HEK293T (cell line): ENCODE measurements at regions of chr9 and their contacts with region 1.

Region 1: DNA sequence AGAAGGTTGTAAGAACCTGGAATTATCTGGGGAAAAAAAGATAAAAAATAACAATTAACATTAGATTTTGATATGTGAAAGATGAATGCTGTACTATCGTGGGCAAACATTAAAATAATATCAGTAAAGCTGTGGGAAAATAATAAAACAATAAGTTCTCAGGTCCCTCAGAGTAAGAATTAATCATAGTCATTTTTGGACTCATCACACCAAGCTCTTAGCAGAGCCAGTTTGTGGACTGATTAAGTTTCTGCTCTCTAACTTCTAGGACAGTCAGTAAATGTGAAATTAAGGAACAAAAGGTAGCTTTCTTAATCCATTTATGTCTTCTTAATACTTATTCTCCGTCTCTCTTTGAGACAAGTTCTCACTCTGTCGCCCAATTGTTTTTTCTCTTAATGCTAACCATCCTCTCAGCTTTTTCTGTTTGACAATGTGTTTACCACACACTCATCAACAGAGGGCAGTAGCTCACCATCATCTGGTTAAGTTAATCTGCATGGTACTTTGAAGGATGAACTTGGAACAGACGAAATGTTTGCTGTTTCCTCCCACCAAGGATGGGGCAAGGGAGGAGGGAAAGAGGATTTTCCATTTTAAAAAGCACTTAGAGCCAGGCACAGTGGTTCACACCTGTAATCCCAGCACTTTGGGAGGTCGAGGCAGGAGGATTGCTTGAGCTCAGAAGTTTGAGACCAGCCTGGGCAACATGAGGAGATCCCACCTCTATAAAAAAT is 5.3 kb upstream of the ACO1 start:
- DNase-seq: peak; percentile 63

Region 2: GRCh38 chr9:32526041-32526706 is 147.0 kb after region 1 on chr9 and contains the start of gene RIGI:
- CTCF ChIA-PET with region 1: interaction called, 18 read pairs
- POLR2A ChIA-PET with region 1: interaction called, 7 read pairs
- DNase-seq: peak; percentile 66

Region 3: GRCh38 chr9:32571969-32572899 is 193.1 kb after region 1 on chr9:
- CTCF ChIA-PET with region 1: interaction called, 81 read pairs
- POLR2A ChIA-PET with region 1: interaction called, 13 read pairs
- DNase-seq: peak; percentile 70

Region 4: DNA sequence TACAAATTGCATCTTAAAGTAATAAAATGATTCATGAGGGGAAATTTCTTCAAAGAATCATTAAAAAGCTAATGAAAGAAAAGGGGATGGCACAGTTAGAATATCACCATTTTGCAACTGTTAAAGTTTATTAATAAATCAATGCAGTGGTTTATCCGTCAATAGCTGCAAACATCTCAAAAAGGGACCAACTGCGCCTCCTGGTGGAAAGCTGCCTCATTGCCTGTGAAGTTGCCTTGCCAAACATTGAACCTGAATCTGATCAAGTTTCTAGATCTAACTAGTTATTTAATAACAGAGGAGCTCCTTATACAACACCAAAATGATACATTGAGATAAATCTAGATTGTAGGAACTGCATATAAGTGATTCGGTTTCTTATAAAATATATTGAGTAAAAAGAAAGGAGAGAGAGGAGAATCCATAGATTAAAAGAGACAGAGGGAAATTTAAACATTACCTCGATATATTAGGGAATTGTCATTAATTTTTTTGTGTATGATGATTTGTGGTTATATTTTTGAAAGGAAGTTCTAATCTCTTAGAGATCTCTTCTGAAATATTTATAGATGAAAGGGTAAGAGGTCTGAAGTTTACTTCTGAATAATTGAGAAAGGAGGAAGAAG is 200.7 kb after region 1 on chr9:
- CTCF ChIA-PET with region 1: interaction called, 81 read pairs
- POLR2A ChIA-PET with region 1: interaction called, 4 read pairs
- DNase-seq: peak; percentile 45